IMR-90 (cell line): ENCODE measurements at regions of chr14 and their contacts with region 1.

Region 1: DNA sequence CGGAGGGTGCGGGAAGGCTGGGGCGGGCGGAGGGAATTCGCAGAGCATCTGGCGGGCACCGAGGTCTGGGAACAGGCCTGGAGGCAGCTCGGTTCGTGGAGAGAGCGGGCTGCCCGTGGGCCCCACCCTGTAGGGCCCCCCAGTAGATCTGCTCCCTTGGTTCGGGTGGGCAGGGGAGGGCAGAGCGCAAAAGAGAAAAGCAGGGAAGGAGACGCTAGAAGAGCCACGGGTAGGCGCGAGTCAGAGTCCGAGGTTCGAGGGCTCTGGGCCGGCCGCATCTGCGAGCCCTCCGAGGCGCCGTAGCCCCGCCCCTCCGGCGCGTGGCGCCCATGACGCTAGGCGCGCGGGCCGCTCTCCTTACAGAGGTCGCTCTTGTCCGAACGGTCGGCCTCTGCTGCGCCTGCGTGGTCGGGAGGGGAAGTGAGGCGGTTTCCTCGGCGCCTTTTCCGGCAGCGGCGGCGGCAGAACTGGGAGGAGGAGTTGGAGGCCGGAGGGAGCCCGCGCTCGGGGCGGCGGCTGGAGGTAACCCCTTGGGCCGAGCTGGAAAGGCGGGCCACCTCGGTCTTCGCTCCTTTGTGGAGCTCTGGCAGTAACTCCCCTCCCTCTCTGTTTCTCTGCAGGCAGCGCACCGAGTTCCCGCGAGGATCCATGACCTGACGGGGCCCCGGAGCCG is at the start of gene ARF6:
- DNase-seq: peak; percentile 96
- ATAC-seq: peak; percentile 97
- H3K4me3 ChIP-seq: peak within 1 kb of the TSS; percentile 84
- H3K27ac ChIP-seq: peak within 1 kb of the TSS; percentile 98
- H3K4me1 ChIP-seq: peaks cover 2% of the 10 kb centered on the region; the same call in 1 of the 2 replicates
- H3K27me3 ChIP-seq: no peaks in the 10 kb centered on the region
- CTCF ChIP-seq: peak; percentile 26; the same call in 1 of the 2 replicates
- POLR2A ChIP-seq: peak; percentile 92
- RAD21 ChIP-seq: peak; percentile 27
- total RNA-seq, gene ARF6: 40.1 and 65.8 TPM in 2 replicates

Region 2: DNA sequence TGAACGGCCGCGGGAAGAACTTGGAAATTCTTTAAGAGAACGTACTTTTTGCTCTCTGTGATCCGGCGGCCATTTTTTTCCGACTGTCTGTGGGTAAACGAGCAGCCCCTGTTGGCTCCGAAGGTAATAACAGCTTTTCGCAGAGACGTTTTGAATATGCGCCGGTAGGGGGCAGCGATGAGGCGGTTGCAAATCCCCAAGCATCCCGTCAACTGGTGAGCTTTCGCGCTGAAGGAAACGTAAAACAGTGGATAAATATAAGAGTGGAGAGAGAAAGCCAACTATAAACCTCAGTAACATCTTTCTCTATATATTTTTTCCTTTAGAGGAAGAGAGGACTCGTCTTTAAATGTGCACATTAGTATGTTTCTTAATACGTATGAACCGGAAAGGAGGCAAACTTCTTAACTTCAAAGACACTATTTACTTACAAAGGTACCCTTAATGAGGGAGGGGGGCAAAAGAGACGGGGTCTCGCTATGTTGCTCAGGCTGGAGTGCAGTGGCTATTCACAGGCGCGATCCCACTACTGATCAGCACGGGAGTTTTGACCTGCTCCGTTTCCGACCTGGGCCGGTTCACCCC is 30.6 kb before region 1 on chr14:
- CTCF ChIA-PET with region 1: interaction called, 4 read pairs
- POLR2A ChIA-PET with region 1: interaction called, 3 read pairs
- dilution Hi-C with region 1: no loop called
- in situ Hi-C with region 1: no loop called
- intact Hi-C with region 1: loop called (anchors 1 kb)
- DNase-seq: peak; percentile 87
- ATAC-seq: peak; percentile 59
- H3K4me3 ChIP-seq: peak overlapping the region; percentile 60
- H3K27ac ChIP-seq: peak overlapping the region; percentile 95
- H3K4me1 ChIP-seq: peaks cover 6% of the 10 kb centered on the region
- H3K27me3 ChIP-seq: no peaks in the 10 kb centered on the region
- CTCF ChIP-seq: peak; percentile 100
- POLR2A ChIP-seq: no peak
- RAD21 ChIP-seq: peak; percentile 43

Region 3: GRCh38 chr14:49971156-49972130 is 78.7 kb after region 1 on chr14:
- CTCF ChIA-PET with region 1: no interaction called
- POLR2A ChIA-PET with region 1: interaction called, 4 read pairs
- dilution Hi-C with region 1: no loop called
- in situ Hi-C with region 1: no loop called
- intact Hi-C with region 1: loop called (anchors 2 kb)
- DNase-seq: peak; percentile 25
- ATAC-seq: peak; percentile 5
- H3K4me3 ChIP-seq: no peak overlapping the region
- H3K27ac ChIP-seq: peak overlapping the region; percentile 97
- H3K4me1 ChIP-seq: peaks cover 36% of the 10 kb centered on the region
- H3K27me3 ChIP-seq: no peaks in the 10 kb centered on the region
- CTCF ChIP-seq: no peak
- POLR2A ChIP-seq: no peak
- RAD21 ChIP-seq: no peak

Region 4: GRCh38 chr14:49982501-49982951 is 89.8 kb after region 1 on chr14:
- CTCF ChIA-PET with region 1: no interaction called
- POLR2A ChIA-PET with region 1: no interaction called
- dilution Hi-C with region 1: no loop called
- in situ Hi-C with region 1: no loop called
- intact Hi-C with region 1: loop called (anchors 1 kb)
- DNase-seq: peak; percentile 96
- ATAC-seq: peak; percentile 74
- H3K4me3 ChIP-seq: peak overlapping the region; percentile 3; the same call in 1 of the 2 replicates
- H3K27ac ChIP-seq: peak overlapping the region; percentile 87; the same call in 1 of the 2 replicates
- H3K4me1 ChIP-seq: peaks cover 20% of the 10 kb centered on the region
- H3K27me3 ChIP-seq: no peaks in the 10 kb centered on the region
- CTCF ChIP-seq: no peak
- POLR2A ChIP-seq: no peak
- RAD21 ChIP-seq: no peak

Region 5: DNA sequence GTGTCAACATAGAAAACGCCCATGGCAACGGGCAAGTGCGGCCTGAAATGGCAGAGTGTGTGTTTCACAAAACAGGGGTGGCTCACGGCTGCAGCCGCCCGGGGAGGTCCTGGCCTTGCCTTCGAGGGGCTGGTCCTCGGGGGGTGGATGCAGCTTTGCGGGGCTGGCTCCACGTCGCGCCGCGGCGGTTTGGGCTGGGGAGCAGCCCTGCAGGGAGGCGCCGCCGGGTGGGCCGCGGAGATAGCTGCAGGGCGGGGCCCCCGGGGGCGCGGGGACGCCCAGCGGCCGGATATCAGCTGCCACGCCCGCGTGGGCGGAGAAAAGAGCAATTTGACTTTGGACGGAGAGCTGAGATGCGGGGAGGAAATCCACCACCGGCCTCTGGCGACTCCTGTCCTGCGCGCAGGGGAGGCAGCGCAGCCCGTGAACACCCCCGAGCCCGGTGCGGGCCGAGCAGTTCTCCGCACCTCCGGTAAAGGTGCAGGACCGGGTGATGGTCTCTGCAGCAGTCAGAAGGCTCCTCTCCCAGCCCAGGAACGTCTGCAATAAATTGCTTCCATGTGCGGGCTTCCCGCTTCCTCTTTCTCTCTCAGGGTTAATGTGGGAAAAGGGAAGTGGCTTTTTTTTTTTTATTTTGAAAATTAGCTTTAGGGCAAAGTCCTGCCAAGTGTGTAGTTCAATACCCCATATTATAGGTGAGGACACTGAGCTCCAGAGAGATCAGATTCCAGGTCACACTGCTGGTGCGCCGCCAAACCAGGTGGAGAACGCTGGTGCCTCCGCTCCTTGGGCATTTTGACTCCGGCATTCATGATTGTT is 110.7 kb after region 1 on chr14:
- CTCF ChIA-PET with region 1: no interaction called
- POLR2A ChIA-PET with region 1: no interaction called
- dilution Hi-C with region 1: no loop called
- in situ Hi-C with region 1: no loop called
- intact Hi-C with region 1: loop called (anchors 2 kb)
- DNase-seq: peak; percentile 35
- ATAC-seq: peak; percentile 48
- H3K4me3 ChIP-seq: peak overlapping the region; percentile 44
- H3K27ac ChIP-seq: peak overlapping the region; percentile 70
- H3K4me1 ChIP-seq: peaks cover 39% of the 10 kb centered on the region
- H3K27me3 ChIP-seq: no peaks in the 10 kb centered on the region
- CTCF ChIP-seq: peak; percentile 8; the same call in 1 of the 2 replicates
- POLR2A ChIP-seq: no peak
- RAD21 ChIP-seq: peak; percentile 19

Region 6: DNA sequence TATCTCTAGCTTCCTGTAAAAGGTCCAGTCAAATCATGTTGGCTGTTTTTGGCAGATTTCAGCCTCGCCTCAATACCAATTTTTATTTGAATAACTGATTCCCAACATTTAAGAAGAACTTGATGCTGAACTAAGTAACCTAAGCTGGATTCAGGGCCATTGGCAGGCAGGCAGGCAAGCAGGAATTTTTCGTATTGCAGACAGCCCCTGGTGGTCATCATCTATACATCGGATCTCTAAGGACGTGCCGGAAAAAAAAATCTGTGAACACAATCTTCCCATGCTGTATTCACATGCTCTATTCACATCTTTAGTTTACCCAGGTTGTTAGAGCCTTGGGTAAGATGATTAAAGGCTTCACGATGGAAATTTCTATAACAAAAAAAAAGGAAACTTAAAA is 216.6 kb after region 1 on chr14:
- CTCF ChIA-PET with region 1: no interaction called
- POLR2A ChIA-PET with region 1: no interaction called
- dilution Hi-C with region 1: no loop called
- in situ Hi-C with region 1: no loop called
- intact Hi-C with region 1: loop called (anchors 1 kb)
- DNase-seq: peak; percentile 35
- ATAC-seq: no peak
- H3K4me3 ChIP-seq: no peak overlapping the region
- H3K27ac ChIP-seq: no peak overlapping the region
- H3K4me1 ChIP-seq: no peaks in the 10 kb centered on the region
- H3K27me3 ChIP-seq: no peaks in the 10 kb centered on the region
- CTCF ChIP-seq: peak; percentile 44
- POLR2A ChIP-seq: no peak
- RAD21 ChIP-seq: peak; percentile 49